GM12878 (cell line): ENCODE measurements at regions of chr2 and their contacts with region 1.

Region 1: DNA sequence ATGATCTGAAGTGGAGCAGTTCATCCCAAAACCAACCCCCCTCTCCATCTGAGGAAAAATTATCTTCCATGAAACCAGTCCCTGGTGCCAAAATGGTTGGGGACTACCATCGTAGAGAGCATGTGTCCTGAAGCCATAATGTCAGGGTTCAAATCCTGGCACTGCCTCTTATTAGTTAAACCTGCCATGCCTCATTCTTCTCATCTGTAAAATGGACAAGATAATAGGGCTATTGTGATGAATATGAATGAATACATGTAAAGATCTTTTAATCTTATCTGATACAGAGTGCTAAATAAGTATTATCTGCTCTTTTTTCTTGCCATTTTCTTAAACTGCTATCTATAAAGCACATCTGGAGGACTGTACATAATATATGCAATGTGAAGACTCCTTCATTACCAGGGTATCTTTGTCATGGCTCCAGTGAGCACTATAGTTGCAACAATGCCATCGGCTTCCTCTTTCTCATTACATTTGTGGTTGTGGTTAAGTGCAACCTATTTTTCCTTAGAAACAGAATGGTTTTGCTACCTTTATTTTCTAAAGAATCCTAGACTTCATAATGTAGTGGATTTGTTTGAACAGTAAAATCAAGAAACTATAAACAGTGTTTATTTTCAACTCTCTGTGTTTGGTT is 27.0 kb downstream of the MFSD6 start:
- DNase-seq: no peak
- ATAC-seq: no peak
- H3K4me3 ChIP-seq: no peak overlapping the region
- H3K27ac ChIP-seq: no peak overlapping the region
- H3K4me1 ChIP-seq: peaks cover 30% of the 10 kb centered on the region
- H3K27me3 ChIP-seq: no peaks in the 10 kb centered on the region
- CTCF ChIP-seq: no peak
- EP300 ChIP-seq: no peak
- POLR2A ChIP-seq: no peak
- RAD21 ChIP-seq: no peak

Region 2: DNA sequence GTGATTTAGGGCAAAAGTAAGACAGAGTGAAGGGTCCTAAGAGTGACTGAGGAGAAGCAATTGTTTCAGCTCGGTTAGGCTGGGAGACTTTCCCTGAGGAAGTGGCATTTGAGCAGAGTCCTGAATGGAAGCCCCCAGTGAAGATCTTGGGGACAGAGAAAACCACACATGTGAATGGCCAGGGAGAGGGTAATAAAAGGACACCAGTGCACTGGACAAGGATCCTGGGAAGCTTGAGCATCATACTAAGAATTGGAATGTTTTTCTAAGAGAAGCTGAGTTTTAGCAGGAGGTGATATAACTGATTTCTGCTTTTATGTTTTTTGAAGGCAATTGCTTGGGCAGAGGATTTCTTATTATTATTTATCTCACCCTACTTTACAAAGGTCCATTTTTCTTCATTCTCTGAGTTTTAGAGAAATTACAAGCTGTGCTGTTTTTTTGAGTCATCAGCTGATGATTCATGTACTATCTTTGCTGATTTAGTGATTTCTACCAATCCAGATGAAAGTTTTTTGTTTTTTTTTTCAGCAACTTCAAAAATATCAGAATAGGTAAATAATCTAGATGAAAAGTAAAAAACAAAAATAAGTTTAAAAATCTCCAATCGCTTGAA is 16.5 kb after region 1 on chr2:
- CTCF ChIA-PET with region 1: interaction called, 6 read pairs
- POLR2A ChIA-PET with region 1: no interaction called
- RAD21 ChIA-PET with region 1: interaction called, 8 read pairs
- SMC1A ChIA-PET with region 1: interaction called, 47 read pairs
- in situ Hi-C with region 1: no loop called
- intact Hi-C with region 1: no loop called
- DNase-seq: no peak
- ATAC-seq: no peak
- H3K4me3 ChIP-seq: no peak overlapping the region
- H3K27ac ChIP-seq: no peak overlapping the region
- H3K4me1 ChIP-seq: peaks cover 7% of the 10 kb centered on the region
- H3K27me3 ChIP-seq: no peaks in the 10 kb centered on the region
- CTCF ChIP-seq: no peak
- EP300 ChIP-seq: no peak
- POLR2A ChIP-seq: no peak
- RAD21 ChIP-seq: no peak